ENCODE measurements at regions of chr17 and their contacts with region 1.

Region 1: GRCh38 chr17:75904749-75905521 is at the start of gene MRPL38:
- DNase-seq: peak; percentile 78 to 99 (median 88)

Region 2: DNA sequence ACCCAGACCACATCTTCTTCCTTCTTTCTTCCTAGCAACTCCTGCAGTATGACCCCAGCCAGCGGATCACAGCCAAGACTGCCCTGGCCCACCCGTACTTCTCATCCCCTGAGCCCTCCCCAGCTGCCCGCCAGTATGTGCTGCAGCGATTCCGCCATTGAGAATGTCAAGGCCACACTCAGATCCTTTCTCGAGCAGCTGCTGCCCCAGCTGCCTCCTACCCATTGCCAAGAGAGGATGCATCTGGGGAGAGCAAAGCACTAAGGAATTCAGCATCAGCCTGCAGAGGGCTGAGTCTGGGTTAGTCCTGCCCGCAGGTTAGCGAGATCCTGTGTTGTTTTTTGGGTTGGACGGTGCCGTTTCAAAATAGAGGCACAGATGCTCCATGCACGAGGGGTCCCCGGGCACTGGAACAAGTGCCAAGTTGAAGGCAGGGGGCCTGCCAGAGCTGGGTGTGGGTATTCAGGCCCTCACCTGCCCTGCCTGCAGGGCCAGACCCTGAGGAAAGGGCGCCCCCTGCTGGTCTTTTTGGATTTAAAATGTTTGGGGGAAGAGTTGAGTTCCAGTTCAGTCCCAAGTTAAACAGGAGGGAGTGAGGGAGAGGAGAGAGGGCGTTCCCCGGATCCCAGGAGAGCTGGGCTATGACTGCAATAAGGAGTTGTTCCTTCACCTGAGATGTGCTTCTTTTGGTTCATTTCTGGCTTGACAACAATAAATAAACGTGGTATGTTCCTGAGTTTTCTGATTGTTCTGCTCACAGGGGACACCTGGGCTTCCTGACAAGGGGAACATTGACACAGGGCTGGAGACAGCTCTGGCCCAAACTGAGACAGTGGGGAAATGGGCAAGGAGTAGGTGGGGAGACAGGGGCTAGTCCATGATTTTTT is 100.6 kb after region 1 on chr17:
- intact Hi-C with region 1: loop called (anchors 1 kb)
- DNase-seq: peak in 8 of 10 donors; percentile 52 to 87 (median 83)

Measured in posterior cingulate gyrus (tissue), 11 donors.